ENCODE measurements at regions of chr2 and their contacts with region 1.

Region 1: GRCh38 chr2:231514103-231514950 is 15.9 kb downstream of the NMUR1 start:
- DNase-seq: peak; percentile 98 to 99 (median 99)
- ATAC-seq: peak; percentile 100
- H3K4me3 ChIP-seq: peak overlapping the region; percentile 31
- H3K4me1 ChIP-seq: no peaks in the 10 kb centered on the region
- CTCF ChIP-seq: no peak

Region 2: DNA sequence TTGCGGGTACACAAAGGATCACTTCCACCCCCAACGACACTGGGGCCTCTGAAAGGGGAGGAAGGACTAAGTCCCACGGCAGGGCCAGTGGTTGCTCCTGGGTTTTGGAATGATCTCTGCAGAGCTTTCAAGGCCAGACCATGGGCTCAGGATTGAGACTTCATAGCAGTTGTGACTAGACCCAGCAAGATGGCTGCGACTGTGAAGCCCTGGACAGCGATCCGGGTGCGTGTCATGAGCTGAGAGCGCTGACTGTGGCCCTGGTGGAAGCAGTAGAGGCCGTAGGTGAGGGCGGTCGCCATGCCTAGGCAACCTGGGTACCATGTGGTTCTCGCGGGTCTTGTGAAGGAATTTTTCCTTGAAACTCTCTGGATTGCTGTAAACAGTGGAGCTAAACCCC is 77.4 kb before region 1 on chr2:
- intact Hi-C with region 1: no loop called
- DNase-seq: no peak
- ATAC-seq: no peak
- H3K4me3 ChIP-seq: no peak overlapping the region
- H3K4me1 ChIP-seq: no peaks in the 10 kb centered on the region
- CTCF ChIP-seq: no peak

Region 3: GRCh38 chr2:231463698-231464575 is 50.4 kb before region 1 on chr2 and contains the start of gene NCL:
- intact Hi-C with region 1: loop called in 1 of 2 experiments (anchors 10 kb)
- DNase-seq: peak; percentile 89 to 99 (median 91)
- ATAC-seq: peak; percentile 72
- H3K4me3 ChIP-seq: peak within 1 kb of the TSS; percentile 69
- H3K4me1 ChIP-seq: peaks cover 25% of the 10 kb centered on the region
- CTCF ChIP-seq: no peak
- total RNA-seq, gene NCL: 239 to 369 (median 328) TPM

Region 4: GRCh38 chr2:231557571-231558237 is 43.4 kb after region 1 on chr2:
- intact Hi-C with region 1: loop called in 1 of 2 experiments (anchors 5 kb)
- DNase-seq: peak; percentile 49 to 76 (median 60)
- ATAC-seq: peak; percentile 92
- H3K4me3 ChIP-seq: no peak overlapping the region
- H3K4me1 ChIP-seq: peaks cover 5% of the 10 kb centered on the region
- CTCF ChIP-seq: peak; percentile 66

Region 5: DNA sequence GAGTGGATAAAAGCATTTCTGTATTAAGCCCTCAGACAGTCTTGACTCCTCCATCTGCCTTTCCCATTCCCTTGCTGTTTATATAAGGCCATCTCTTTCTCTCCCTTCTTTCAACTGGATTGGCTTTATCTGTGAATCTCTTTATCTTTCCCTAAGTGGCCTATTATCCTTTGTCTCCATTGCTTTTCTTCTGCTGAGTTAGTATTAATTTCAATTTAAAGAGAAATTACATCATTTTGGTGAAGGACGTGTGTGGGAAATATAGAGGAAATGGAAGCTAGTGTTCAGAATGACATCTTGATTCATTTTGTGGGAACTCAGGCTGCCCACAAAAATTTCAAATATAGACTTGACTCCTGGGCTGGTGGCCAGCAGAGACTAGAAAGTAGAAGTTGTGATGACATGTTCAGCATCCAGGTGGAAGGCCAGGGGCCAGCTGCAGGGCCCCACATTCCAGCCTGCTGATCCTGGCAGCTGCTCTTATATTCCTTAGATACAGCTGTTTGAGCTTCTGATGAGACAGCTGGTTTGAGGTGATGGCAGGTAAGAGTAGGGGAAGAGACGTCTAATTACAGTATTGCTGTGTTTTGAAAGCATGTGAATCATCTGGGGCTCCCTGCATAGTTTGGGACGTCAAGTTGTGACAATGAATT is 499.5 kb after region 1 on chr2:
- intact Hi-C with region 1: no loop called
- DNase-seq: peak in 1 of 3 donors; percentile 9
- ATAC-seq: no peak
- H3K4me3 ChIP-seq: no peak overlapping the region
- H3K4me1 ChIP-seq: no peaks in the 10 kb centered on the region
- CTCF ChIP-seq: no peak